ENCODE measurements at regions of chr6 and their contacts with region 1.

Region 1: DNA sequence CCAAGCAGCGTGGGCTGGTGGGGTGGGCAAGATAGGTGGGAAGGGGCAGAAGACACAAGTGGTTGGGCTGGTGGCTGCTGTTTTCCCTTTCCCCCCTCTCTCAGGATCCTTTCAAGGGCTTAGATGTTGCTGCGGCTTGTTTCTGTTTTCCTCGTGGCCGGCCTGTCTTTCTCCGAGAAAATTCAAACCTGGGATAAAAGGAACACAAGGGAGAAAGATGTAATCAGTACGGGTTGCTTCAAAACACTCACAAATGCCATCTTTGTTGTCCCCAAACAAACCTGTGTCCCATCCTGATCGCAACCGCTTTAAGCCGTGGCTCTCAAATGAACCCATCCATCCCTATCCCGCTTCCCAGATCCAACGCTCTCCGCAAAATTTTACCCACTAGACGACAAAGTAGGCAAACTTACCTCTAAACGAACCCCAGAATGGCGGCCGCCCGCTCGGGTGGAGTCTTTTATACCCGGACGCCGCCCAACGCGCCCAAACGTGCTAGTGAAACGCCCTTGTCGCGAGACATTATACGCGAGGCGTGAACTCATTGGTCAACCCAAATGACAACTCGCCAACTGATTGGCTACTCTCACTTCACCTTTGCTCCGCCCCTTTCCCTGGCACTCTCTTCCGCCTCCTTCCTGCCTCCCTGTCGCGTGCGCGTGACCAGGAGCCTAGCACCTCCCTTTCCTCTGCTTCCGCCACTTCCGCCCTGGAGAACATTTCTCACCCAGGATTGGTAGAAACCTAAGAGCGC is at the start of gene PPP1R10:
- DNase-seq: peak; percentile 99
- H3K4me3 Mint-ChIP-seq: peak within 1 kb of the TSS; percentile 91
- H3K27ac Mint-ChIP-seq: peak within 1 kb of the TSS; percentile 98
- H3K4me1 Mint-ChIP-seq: peaks cover 43% of the 10 kb centered on the region
- H3K27me3 Mint-ChIP-seq: peaks cover 6% of the 10 kb centered on the region
- total RNA-seq, gene PPP1R10: 124 and 126 TPM in 2 replicates

Region 2: DNA sequence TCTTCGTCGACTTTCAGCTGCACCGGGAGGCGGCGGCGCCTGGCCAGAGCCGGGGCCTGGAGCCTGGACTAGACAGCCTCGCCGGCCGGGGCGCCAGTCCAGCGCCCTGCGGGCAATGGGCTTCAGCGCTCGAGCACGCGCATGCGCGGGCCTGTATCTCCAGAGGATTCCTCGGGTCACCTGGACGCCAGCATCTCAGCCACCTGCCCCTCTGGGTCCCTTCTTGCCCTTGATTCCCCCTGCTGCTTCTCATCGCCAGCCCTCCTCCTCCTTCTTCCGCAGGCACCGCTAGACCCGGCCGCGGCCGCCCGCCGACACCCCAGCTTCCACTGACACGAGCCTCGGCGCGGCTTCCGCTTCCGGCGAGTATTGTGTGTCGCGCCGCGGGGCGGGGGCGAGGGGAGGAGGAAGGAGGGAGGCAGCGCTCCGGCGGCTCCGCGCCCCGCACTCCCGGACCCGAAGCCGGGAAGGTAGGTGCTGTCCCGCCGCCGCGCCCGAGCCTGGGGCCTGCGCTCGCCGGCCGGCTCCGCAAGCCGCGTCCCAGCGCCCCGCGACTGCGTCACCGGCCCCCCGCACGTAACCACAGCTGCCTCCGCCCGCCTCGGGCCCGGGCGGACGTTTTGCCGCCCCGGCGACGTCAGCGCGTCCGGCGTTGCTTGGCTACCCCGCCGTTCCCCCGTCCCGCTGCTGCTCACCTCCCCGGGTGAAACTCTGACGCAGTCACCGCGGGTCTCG is 290.3 kb before region 1 on chr6 and contains the start of gene TRIM39:
- intact Hi-C with region 1: loop called (anchors 1 kb)
- DNase-seq: peak; percentile 85
- H3K4me3 Mint-ChIP-seq: peak within 1 kb of the TSS; percentile 99
- H3K27ac Mint-ChIP-seq: peak within 1 kb of the TSS; percentile 100
- H3K4me1 Mint-ChIP-seq: peaks cover 54% of the 10 kb centered on the region
- H3K27me3 Mint-ChIP-seq: no peaks in the 10 kb centered on the region
- total RNA-seq, gene TRIM39: 14.2 and 15.6 TPM in 2 replicates

Region 3: GRCh38 chr6:30565772-30566171 is 51.2 kb before region 1 on chr6:
- intact Hi-C with region 1: no loop called
- DNase-seq: no peak
- H3K4me3 Mint-ChIP-seq: no peak overlapping the region
- H3K27ac Mint-ChIP-seq: no peak overlapping the region
- H3K4me1 Mint-ChIP-seq: peaks cover 29% of the 10 kb centered on the region
- H3K27me3 Mint-ChIP-seq: no peaks in the 10 kb centered on the region

Region 4: DNA sequence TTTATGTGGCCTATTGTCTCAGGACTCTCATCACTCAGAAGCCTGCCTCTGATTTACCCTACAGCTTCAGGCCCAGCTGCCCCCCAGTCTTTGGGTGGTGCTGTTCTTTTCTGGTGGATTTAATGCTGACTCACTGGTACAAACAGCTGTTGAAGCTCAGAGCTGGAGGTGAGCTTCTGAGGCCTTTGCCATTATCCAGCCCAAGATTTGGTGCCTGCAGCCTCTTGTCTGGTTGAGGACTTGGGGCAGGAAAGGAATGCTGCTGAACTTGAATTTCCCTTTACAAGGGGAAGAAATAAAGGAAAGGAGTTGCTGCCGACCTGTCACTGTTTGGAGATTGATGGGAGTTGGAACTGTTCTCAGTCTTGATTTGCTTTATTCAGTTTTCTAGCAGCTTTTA is 26.0 kb before region 1 on chr6:
- intact Hi-C with region 1: loop called (anchors 2 kb)
- DNase-seq: no peak
- H3K4me3 Mint-ChIP-seq: no peak overlapping the region
- H3K27ac Mint-ChIP-seq: no peak overlapping the region
- H3K4me1 Mint-ChIP-seq: peaks cover 9% of the 10 kb centered on the region
- H3K27me3 Mint-ChIP-seq: no peaks in the 10 kb centered on the region

Region 5: DNA sequence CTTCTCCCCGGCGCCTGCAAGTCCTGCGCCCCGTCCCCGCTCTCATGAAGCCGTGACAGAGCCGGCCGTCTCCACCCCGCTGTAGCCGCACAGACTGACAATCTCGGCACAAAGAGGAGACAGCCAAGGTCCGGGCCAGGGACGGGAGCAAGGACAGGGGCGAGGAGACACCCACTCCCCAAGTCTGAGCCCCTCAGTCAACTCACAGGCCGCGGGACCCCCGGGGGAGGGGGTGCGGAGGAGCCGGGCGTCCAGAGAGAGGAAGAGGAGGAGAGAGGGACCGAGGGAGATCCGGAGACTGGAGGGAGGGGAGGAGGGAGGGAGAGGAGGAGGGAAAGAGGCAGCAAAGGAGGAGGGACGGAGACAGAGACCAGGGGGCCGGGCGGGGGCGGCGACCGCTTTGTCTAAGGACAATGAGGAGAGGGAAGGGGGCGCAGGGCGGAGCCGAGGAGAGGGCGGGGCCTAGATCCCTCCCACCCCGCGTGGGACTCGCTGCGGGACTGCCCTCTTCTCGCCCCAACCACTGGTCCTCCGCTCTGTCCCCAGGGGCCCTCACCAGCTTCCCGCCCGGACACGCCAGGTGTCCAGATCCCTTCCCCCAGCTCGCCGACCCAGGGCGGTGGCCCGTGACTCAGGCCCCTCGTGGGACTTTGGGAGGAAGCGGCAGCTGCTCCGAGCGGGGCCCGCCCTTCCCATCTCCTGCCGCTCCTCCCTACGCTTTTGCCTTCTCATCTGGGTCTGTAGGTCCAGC is 70.1 kb after region 1 on chr6:
- intact Hi-C with region 1: loop called (anchors 1 kb)
- DNase-seq: peak; percentile 83
- H3K4me3 Mint-ChIP-seq: peak overlapping the region; percentile 94
- H3K27ac Mint-ChIP-seq: peak overlapping the region; percentile 87
- H3K4me1 Mint-ChIP-seq: peaks cover 50% of the 10 kb centered on the region
- H3K27me3 Mint-ChIP-seq: no peaks in the 10 kb centered on the region

Region 6: GRCh38 chr6:30752157-30752927 is 135.4 kb after region 1 on chr6:
- intact Hi-C with region 1: no loop called
- DNase-seq: no peak
- H3K4me3 Mint-ChIP-seq: no peak overlapping the region
- H3K27ac Mint-ChIP-seq: peak overlapping the region; percentile 19
- H3K4me1 Mint-ChIP-seq: peaks cover 22% of the 10 kb centered on the region
- H3K27me3 Mint-ChIP-seq: peaks cover 1% of the 10 kb centered on the region

Region 7: DNA sequence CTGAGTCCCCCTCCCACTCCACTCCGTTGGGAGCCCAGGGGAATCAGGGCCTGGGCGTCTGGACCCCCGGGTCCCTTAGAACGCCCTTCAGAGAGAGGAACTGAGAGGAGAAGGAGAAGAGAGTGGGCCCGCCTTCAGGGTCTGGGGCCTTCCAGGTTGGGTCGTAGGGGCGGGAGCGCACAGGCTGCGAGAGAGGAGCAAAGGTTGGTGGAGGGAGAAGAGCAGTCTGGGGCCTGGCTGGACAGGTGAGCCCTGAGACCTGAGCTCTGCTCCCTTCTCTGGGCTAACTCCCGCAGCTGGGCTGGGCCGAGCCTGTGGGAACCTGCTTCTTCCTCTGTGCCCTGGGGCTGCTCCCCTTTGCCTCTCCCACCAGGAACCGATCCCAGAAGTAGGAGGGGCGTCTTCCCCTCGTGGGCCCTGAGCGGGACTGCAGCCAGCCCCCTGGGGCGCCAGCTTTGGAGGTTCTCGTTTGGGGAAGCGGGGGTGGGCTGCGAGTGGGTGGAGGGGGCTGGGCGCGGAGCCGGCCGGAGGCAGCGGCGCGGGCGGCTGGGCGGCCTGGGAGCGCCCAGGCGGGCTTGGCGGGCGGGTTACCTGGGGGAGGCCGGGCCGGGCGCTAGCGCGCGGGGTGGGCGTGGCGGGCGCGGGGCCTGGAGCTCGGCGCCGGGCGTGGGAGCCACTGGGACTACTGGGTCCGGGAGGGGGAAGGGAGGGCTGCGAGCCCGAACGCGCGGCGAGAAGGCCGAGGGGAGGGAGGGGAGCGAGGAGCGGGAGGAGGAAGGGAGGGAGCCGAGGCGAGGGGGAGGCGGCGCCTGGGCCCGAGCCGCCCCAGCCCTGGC is 266.9 kb after region 1 on chr6 and contains the start of gene DDR1:
- intact Hi-C with region 1: loop called (anchors 5 kb)
- DNase-seq: no peak
- H3K4me3 Mint-ChIP-seq: peak within 1 kb of the TSS; percentile 77
- H3K27ac Mint-ChIP-seq: peak within 1 kb of the TSS; percentile 65
- H3K4me1 Mint-ChIP-seq: peaks cover 45% of the 10 kb centered on the region
- H3K27me3 Mint-ChIP-seq: peaks cover 3% of the 10 kb centered on the region
- total RNA-seq, gene DDR1: 21.4 and 24.8 TPM in 2 replicates

Region 8: DNA sequence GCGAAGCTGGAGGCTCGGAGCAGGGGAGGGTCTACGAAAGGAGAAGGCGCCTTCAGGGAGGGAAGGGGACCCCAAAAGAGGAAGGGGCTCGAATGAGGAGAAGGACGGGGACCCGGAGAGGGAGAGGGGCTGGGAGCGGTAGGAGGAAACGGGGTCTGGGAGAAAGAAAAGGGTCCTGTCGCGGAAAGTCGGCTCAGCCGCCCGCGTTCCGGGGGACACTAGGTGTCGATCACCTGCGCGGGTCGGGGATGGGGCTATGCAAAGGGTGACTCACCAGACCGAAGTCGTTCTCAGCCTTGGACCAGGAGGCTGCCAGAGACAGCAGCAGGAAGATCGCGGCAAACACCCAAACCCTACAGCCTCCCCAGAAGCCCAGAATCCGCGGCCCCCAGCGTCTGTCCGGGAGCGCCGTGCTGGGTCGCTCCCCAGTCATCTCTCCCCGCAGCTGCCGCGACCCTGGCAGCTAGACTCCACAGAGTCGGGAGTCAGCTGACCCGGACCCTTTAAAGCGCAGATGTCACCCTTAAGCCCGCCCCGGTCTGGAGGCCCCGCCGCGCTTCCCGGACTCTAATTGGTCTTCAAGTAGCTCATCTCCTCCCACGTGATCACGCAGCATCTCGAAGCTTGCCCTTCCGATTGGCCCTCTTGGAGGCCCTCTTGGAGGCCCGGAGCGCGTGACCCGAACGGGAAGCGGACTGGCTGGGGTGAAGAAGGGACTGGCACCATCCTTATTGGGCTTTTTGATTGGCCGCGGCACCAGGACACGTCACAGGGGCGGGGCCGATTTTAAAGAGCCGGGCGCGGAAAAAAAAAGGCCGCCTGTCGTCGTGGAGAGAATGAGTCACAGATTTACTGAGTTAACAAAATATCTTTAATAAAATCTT is 1245.6 kb after region 1 on chr6 and contains the start of gene NEU1:
- intact Hi-C with region 1: loop called (anchors 10 kb)
- DNase-seq: peak; percentile 99
- H3K4me3 Mint-ChIP-seq: peak within 1 kb of the TSS; percentile 97
- H3K27ac Mint-ChIP-seq: peak within 1 kb of the TSS; percentile 94
- H3K4me1 Mint-ChIP-seq: peaks cover 37% of the 10 kb centered on the region
- H3K27me3 Mint-ChIP-seq: peaks cover 3% of the 10 kb centered on the region
- total RNA-seq, gene NEU1: 22.1 and 24.3 TPM in 2 replicates

Measured in activated T-helper 1 cell treated with anti-CD3 and anti-CD28 coated beads, Interleukin-12 subunit alpha, Interleukin-12 subunit beta, Interleukin-2, Interleukin-4 antibody, amounts not matched to agents 30 ng/mL and 10 ng/mL and 1 ng/mL, durations not matched to agents 14 hours and 24 hours and 36 hours (primary cell).